Activated CD8-positive, alpha-beta T cell treated with anti-CD3 and anti-CD28 coated beads for 36 hours (primary cell): ENCODE measurements at regions of chr13 and their contacts with region 1.

Region 1: DNA sequence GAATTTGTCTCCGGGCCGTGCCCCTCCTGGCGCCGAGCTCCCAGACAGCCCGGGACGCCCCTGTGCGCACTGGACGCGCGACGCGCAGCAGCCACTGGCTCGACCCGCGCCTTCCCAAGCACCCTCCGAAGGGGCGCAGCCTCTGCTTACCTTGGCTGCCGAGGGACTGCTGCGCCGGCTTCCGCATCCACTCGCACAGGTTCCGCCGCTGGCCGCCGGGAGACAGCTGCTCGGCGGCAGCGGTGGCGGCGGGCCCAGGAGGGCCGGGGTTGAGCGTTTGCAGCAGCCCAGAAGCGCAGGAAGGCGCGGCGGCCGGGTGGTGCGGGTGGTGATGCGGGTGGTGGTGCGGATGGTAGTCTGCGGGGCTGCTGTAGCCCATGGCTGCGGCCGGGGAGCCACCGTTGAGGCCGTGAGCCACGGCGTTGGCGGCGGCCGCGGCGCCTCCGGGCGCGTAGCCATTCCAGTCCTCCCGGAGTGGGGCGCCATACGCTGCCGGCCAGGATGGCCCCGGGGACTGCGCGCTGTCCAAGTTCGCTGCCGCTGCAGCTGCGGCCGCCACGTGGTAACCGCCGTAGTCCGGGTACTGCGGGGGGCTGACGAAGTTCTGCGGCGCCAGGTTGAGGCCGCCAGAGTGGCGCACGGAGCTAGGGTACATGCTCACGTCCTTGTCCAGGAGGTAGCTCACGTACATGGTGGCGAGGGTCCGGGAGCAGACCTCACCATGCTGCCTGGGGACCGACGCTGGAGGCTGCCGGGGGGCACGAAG is 616 bp downstream of the CDX2 start:
- DNase-seq: no peak
- ATAC-seq: no peak
- H3K4me3 Mint-ChIP-seq: no peak overlapping the region
- H3K27ac Mint-ChIP-seq: no peak overlapping the region
- H3K4me1 Mint-ChIP-seq: peaks cover 22% of the 10 kb centered on the region
- H3K27me3 Mint-ChIP-seq: peaks cover 73% of the 10 kb centered on the region
- CTCF ChIP-seq: no peak

Region 2: DNA sequence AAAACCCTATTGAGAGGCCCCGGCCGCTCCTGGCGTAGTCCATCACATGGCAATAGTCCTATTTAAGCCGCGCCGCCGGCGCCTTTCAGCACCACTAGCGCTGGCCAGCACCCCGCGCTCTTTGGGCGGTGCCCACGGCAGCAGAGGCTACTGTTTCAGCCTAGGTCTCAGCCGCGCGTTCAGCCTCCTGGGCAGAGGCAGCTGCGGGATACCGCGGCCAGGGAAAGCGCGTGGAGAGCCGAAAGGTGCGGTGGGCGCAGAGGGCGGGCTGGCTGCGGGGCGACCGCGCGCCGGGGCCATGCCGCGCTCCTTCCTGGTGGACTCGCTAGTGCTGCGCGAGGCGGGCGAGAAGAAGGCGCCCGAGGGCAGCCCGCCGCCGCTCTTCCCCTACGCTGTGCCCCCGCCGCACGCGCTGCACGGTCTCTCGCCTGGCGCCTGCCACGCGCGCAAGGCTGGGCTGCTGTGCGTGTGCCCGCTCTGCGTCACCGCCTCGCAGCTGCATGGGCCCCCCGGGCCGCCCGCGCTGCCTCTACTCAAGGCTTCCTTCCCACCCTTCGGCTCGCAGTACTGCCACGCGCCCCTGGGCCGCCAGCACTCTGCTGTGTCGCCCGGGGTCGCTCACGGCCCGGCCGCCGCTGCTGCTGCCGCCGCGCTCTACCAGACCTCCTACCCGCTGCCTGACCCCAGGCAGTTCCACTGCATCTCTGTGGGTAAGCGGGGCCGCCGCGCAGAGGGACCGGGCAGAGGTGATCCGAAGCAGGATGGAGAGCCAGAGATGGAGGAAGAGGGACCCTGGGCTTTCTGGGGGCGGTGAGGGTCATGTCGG is 175.9 kb before region 1 on chr13 and contains the start of gene GSX1:
- CTCF ChIA-PET with region 1: no interaction called
- POLR2A ChIA-PET with region 1: no interaction called
- intact Hi-C with region 1: loop called (anchors 5 kb)
- DNase-seq: peak; percentile 73
- ATAC-seq: peak; percentile 78
- H3K4me3 Mint-ChIP-seq: peak within 1 kb of the TSS; percentile 72
- H3K27ac Mint-ChIP-seq: no peak within 1 kb of the TSS
- H3K4me1 Mint-ChIP-seq: peaks cover 32% of the 10 kb centered on the region
- H3K27me3 Mint-ChIP-seq: peaks cover 79% of the 10 kb centered on the region
- CTCF ChIP-seq: no peak
- total RNA-seq, gene GSX1: not detected

Region 3: GRCh38 chr13:27926644-27927434 is 41.7 kb before region 1 on chr13:
- CTCF ChIA-PET with region 1: no interaction called
- POLR2A ChIA-PET with region 1: interaction called, 3 read pairs
- intact Hi-C with region 1: loop called (anchors 5 kb)
- DNase-seq: peak; percentile 24
- ATAC-seq: no peak
- H3K4me3 Mint-ChIP-seq: no peak overlapping the region
- H3K27ac Mint-ChIP-seq: no peak overlapping the region
- H3K4me1 Mint-ChIP-seq: peaks cover 30% of the 10 kb centered on the region
- H3K27me3 Mint-ChIP-seq: peaks cover 91% of the 10 kb centered on the region
- CTCF ChIP-seq: no peak

Region 4: GRCh38 chr13:28744091-28744536 is 775.6 kb after region 1 on chr13:
- CTCF ChIA-PET with region 1: no interaction called
- POLR2A ChIA-PET with region 1: no interaction called
- intact Hi-C with region 1: no loop called
- DNase-seq: no peak
- ATAC-seq: no peak
- H3K4me3 Mint-ChIP-seq: no peak overlapping the region
- H3K27ac Mint-ChIP-seq: no peak overlapping the region
- H3K4me1 Mint-ChIP-seq: no peaks in the 10 kb centered on the region
- H3K27me3 Mint-ChIP-seq: peaks cover 1% of the 10 kb centered on the region
- CTCF ChIP-seq: no peak